CD4-positive, alpha-beta memory T cell (primary cell): ENCODE measurements at regions of chr10 and their contacts with region 1.

Region 1: DNA sequence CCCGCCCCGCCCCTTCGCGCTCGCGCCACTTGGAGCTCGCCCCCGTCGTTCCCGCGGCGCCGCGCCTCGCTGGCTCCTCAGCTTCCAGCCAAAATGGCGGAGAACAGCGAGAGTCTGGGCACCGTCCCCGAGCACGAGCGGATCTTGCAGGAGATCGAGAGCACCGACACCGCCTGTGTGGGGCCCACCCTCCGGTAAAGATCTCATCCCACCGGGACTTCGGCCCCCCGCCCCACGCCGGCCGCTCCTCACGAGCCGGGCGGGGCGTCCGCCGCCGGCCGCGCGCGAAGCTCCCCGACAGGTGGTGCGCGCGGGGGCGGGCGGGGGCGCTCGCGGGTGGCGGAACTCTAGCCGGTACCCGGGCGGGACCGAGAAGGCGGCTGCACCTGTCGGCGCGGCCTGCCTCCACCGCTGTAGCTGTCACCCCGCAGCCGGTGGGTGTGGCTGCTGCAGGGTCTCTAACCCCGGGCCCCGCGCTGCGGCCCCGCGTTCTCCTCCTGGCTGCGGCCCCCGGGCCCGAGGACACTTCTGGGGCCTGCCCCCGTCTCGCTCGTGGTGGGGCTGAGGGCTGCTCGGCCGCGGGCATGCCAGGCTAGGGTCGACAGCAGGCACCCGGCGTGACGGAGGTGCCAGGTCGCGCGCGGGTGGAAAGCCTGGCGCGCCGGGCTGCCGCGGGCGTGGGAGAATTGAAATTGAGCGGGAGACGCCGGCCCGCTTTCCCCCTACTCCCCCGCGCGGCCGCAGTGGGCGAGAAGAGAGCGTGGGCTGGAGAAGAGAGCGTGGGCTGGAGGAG is at the start of gene EXOC6:
- DNase-seq: peak; percentile 88 to 93 (median 91)
- H3K4me3 ChIP-seq: peak within 1 kb of the TSS; percentile 60 to 76
- H3K4me3 Mint-ChIP-seq: peak within 1 kb of the TSS; percentile 85 to 96 (median 93)
- H3K27ac ChIP-seq: peak within 1 kb of the TSS; percentile 67
- H3K27ac Mint-ChIP-seq: peak within 1 kb of the TSS; percentile 86 to 95 (median 93)
- H3K4me1 ChIP-seq: peaks cover 19% of the 10 kb centered on the region
- H3K4me1 Mint-ChIP-seq: peaks cover 10 to 38% (median 24%) of the 10 kb centered on the region in 4 donors
- H3K27me3 ChIP-seq: no peaks in the 10 kb centered on the region
- H3K27me3 Mint-ChIP-seq: no peaks in the 10 kb centered on the region
- total RNA-seq, gene EXOC6: 10.5 to 11.4 TPM

Region 2: DNA sequence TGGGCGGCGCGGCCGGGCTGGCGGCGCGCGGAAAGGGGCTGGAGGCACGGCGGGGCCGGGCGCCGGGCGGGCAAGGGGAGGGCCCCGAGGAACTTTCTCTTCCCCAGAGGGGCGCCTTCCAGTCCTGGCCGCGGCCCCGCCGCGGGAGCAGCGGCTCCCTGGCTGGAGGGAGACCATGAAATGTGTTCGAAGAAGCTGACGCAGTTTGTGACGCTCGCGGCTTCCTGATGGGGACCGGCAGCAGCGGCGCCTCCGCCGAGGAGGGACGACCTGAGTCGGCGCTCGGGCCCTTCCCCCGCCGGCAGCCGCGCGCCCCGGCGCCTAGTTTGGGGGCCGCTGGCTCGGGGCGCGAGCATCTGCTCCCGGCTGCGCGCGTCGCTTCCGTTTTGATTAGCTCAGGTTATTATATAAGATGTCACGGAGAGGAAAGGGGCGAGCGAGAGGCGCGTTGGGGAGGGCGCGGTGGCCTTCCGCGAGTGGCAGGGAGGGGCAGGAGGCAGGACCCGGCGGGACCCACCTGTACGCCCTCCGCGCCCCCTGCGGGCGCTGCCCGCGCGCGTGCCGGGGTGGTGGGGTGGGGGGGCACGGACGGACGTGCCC is 1685.3 kb before region 1 on chr10:
- CTCF ChIA-PET with region 1: interaction called, 3 read pairs
- POLR2A ChIA-PET with region 1: interaction called, 3 read pairs
- intact Hi-C with region 1: loop called (anchors 10 kb)
- DNase-seq: peak; percentile 86 to 94 (median 90)
- H3K4me3 ChIP-seq: peak overlapping the region; percentile 63 to 73
- H3K4me3 Mint-ChIP-seq: peak overlapping the region; percentile 91 to 95 (median 93)
- H3K27ac ChIP-seq: peak overlapping the region; percentile 83
- H3K27ac Mint-ChIP-seq: peak overlapping the region; percentile 94 to 99 (median 97)
- H3K4me1 ChIP-seq: peaks cover 47% of the 10 kb centered on the region
- H3K4me1 Mint-ChIP-seq: peaks cover 36 to 65% (median 49%) of the 10 kb centered on the region in 4 donors
- H3K27me3 ChIP-seq: no peaks in the 10 kb centered on the region
- H3K27me3 Mint-ChIP-seq: no peaks in the 10 kb centered on the region

Region 3: GRCh38 chr10:92290837-92291615 is 557.6 kb before region 1 on chr10 and contains the starts of genes CPEB3 and MARCHF5:
- CTCF ChIA-PET with region 1: no interaction called
- POLR2A ChIA-PET with region 1: no interaction called
- intact Hi-C with region 1: loop called (anchors 2 kb)
- DNase-seq: peak; percentile 87 to 94 (median 89)
- H3K4me3 ChIP-seq: peak within 1 kb of the TSS; percentile 85 to 87
- H3K4me3 Mint-ChIP-seq: peak within 1 kb of the TSS; percentile 89 to 98 (median 96)
- H3K27ac ChIP-seq: peak within 1 kb of the TSS; percentile 90
- H3K27ac Mint-ChIP-seq: peak within 1 kb of the TSS; percentile 86 to 94 (median 91)
- H3K4me1 ChIP-seq: peaks cover 26% of the 10 kb centered on the region
- H3K4me1 Mint-ChIP-seq: peaks cover 18 to 39% (median 29%) of the 10 kb centered on the region in 4 donors
- H3K27me3 ChIP-seq: no peaks in the 10 kb centered on the region
- H3K27me3 Mint-ChIP-seq: no peaks in the 10 kb centered on the region
- total RNA-seq, gene CPEB3: 3.4 to 3.8 TPM
- total RNA-seq, gene MARCHF5: 38.6 to 40.8 TPM

Region 4: GRCh38 chr10:92719991-92720830 is 128.4 kb before region 1 on chr10:
- CTCF ChIA-PET with region 1: no interaction called
- POLR2A ChIA-PET with region 1: no interaction called
- intact Hi-C with region 1: no loop called
- DNase-seq: no peak
- H3K4me3 ChIP-seq: no peak overlapping the region
- H3K4me3 Mint-ChIP-seq: no peak overlapping the region
- H3K27ac ChIP-seq: no peak overlapping the region
- H3K27ac Mint-ChIP-seq: no peak overlapping the region
- H3K4me1 ChIP-seq: no peaks in the 10 kb centered on the region
- H3K4me1 Mint-ChIP-seq: no peaks in the 10 kb centered on the region
- H3K27me3 ChIP-seq: no peaks in the 10 kb centered on the region
- H3K27me3 Mint-ChIP-seq: peaks cover 17 to 39% of the 10 kb centered on the region in 2 donors

Region 5: GRCh38 chr10:92830478-92831389 is 17.9 kb before region 1 on chr10:
- CTCF ChIA-PET with region 1: interaction called, 49 read pairs
- POLR2A ChIA-PET with region 1: interaction called, 4 read pairs
- intact Hi-C with region 1: no loop called
- DNase-seq: peak in 2 of 5 donors; percentile 9 to 14
- H3K4me3 ChIP-seq: peak overlapping the region in 1 of 2 donors; percentile 15
- H3K4me3 Mint-ChIP-seq: peak overlapping the region; percentile 80 to 90 (median 86)
- H3K27ac ChIP-seq: no peak overlapping the region
- H3K27ac Mint-ChIP-seq: peak overlapping the region in 5 of 7 donors; percentile 58 to 92 (median 77)
- H3K4me1 ChIP-seq: peaks cover 13% of the 10 kb centered on the region
- H3K4me1 Mint-ChIP-seq: peaks cover 10 to 13% (median 11%) of the 10 kb centered on the region in 4 donors
- H3K27me3 ChIP-seq: no peaks in the 10 kb centered on the region
- H3K27me3 Mint-ChIP-seq: no peaks in the 10 kb centered on the region

Region 6: DNA sequence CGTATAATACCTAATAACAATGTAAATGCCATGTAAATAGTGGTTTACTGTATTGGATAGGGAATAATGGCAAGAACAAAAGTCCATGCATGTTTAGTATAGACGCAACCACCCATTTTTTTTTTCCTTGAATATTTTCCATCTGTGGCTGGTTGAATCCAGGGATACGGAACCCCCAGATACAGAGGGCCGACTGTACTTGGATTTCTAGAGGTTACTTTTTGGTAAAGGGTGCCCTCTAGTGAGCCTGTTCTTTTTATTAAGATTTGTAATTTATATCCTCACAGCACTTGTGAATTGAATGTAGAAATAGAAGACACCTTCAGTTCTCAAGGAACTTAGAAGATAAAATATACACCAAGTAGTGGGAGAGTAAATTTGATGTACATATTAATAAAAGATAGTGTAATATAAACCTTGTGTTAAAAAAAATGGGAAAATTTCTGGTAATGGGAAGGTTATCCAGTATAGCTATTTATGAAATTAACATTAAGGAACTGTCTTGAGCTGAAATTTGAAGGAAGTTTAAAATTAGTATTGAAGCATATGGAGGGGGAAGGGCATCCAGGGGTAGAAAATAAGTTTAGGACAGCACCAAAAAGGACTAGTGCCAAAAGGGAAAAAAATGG is 31.7 kb after region 1 on chr10:
- CTCF ChIA-PET with region 1: interaction called, 103 read pairs
- POLR2A ChIA-PET with region 1: interaction called, 17 read pairs
- intact Hi-C with region 1: loop called (anchors 1 kb)
- DNase-seq: peak in 4 of 5 donors; percentile 28 to 38 (median 32)
- H3K4me3 ChIP-seq: no peak overlapping the region
- H3K4me3 Mint-ChIP-seq: no peak overlapping the region
- H3K27ac ChIP-seq: no peak overlapping the region
- H3K27ac Mint-ChIP-seq: no peak overlapping the region
- H3K4me1 ChIP-seq: peaks cover 23% of the 10 kb centered on the region
- H3K4me1 Mint-ChIP-seq: peaks cover 21 to 31% (median 24%) of the 10 kb centered on the region in 4 donors
- H3K27me3 ChIP-seq: no peaks in the 10 kb centered on the region
- H3K27me3 Mint-ChIP-seq: no peaks in the 10 kb centered on the region

Region 7: DNA sequence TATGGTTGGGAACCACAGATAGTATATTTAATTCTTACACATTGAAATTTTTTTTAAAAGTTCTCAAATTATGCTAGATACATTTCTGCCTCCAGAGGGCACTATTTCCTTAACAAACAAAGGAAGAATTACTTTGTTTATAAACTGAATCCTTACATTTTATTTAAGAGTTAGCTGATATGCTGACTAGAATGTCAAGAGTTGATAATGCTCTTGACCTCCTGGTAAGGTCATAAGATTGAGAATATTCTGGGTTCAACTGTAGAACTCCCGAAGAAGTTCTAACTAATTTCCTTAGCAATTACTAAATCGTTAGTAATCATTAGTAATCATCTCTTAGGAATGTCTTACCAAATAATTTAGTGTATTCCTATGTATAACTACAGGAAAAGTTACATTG is 116.7 kb after region 1 on chr10:
- CTCF ChIA-PET with region 1: no interaction called
- POLR2A ChIA-PET with region 1: no interaction called
- intact Hi-C with region 1: no loop called
- DNase-seq: peak in 4 of 5 donors; percentile 14 to 26 (median 18)
- H3K4me3 ChIP-seq: no peak overlapping the region
- H3K4me3 Mint-ChIP-seq: no peak overlapping the region
- H3K27ac ChIP-seq: no peak overlapping the region
- H3K27ac Mint-ChIP-seq: no peak overlapping the region
- H3K4me1 ChIP-seq: no peaks in the 10 kb centered on the region
- H3K4me1 Mint-ChIP-seq: no peaks in the 10 kb centered on the region
- H3K27me3 ChIP-seq: no peaks in the 10 kb centered on the region
- H3K27me3 Mint-ChIP-seq: no peaks in the 10 kb centered on the region

Region 8: DNA sequence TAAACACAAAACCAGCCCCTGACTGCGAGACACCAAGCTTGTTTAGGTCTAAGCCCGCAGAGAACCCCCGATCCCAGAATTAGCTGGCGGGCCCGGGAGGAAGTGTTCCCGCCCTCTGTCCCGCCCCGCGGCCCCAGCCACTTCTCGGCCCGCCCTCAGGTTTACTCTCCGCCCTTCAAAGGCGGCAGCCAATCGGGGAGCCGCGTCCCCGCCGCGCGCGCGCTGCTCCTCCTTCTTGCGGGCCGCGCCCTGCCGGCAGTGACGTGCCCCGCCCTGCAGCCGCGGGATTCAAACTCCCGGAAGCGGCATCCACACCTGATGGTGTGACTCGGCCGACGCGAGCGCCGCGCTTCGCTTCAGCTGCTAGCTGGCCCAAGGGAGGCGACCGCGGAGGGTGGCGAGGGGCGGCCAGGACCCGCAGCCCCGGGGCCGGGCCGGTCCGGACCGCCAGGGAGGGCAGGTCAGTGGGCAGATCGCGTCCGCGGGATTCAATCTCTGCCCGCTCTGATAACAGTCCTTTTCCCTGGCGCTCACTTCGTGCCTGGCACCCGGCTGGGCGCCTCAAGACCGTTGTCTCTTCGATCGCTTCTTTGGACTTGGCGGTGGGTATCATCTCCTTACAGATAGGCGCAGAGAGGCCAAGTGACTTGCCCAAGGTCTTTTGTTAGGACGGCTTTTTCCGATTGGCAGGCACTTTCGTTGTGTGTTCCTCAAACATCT is 647.8 kb after region 1 on chr10 and contains the start of gene CEP55:
- CTCF ChIA-PET with region 1: no interaction called
- POLR2A ChIA-PET with region 1: no interaction called
- intact Hi-C with region 1: loop called (anchors 1 kb)
- DNase-seq: peak; percentile 93 to 97 (median 94)
- H3K4me3 ChIP-seq: peak within 1 kb of the TSS; percentile 83 to 94
- H3K4me3 Mint-ChIP-seq: peak within 1 kb of the TSS; percentile 92 to 95 (median 93)
- H3K27ac ChIP-seq: peak within 1 kb of the TSS; percentile 37
- H3K27ac Mint-ChIP-seq: peak within 1 kb of the TSS; percentile 54 to 92 (median 89)
- H3K4me1 ChIP-seq: peaks cover 23% of the 10 kb centered on the region
- H3K4me1 Mint-ChIP-seq: peaks cover 13 to 23% (median 19%) of the 10 kb centered on the region in 4 donors
- H3K27me3 ChIP-seq: no peaks in the 10 kb centered on the region
- H3K27me3 Mint-ChIP-seq: no peaks in the 10 kb centered on the region
- total RNA-seq, gene CEP55: 0.17 to 0.30 TPM